ENCODE measurements at regions of chr16 and their contacts with region 1.

Region 1: DNA sequence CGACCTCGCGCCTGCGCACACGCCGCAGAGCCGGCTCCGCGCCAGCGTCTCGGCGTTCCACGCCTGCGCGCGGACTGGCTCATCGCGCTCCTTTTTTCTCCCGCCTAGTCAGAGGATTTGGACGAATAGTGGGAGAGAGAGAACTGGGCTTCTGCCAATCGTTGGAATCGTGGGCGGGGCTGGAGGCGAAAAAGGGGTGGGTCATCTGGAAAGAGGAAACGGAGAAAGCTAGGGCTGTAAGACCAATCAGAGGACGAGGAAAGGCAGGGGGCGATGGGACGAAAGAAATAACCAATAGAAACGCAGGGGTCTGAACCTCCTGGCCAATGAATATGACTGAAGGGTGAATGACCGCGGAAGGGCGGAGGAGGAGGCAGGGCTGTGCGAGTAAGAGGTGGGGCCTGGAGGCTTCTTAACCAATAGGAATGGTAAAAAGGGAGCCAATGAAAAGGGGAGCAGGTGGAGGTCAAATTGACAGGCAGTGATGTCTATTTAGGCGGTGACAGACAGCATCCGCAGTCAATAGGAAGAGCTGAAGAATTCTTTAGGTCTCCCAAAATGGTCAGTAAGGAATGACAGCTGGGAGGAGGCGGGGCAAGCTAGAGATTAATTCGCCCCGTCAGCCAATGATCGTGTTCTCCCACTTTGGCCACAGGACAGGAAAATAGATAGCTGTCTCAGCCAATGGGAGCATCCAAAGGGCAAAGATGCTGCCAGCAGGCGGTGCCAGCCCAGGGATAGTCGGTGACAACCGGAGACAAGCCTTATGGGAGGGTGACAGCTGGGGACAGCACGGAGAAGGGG is at the start of gene TBC1D10B:
- DNase-seq: peak; percentile 95
- CTCF ChIP-seq: no peak

Region 2: GRCh38 chr16:30355144-30355894 is 15.3 kb before region 1 on chr16 and contains the start of gene CD2BP2:
- CTCF ChIA-PET with region 1: interaction called, 14 read pairs
- POLR2A ChIA-PET with region 1: interaction called, 11 read pairs
- DNase-seq: peak; percentile 93
- CTCF ChIP-seq: no peak

Region 3: GRCh38 chr16:30657866-30658730 is 287.5 kb after region 1 on chr16 and contains the start of gene FBRS:
- CTCF ChIA-PET with region 1: no interaction called
- POLR2A ChIA-PET with region 1: no interaction called
- DNase-seq: peak; percentile 96
- CTCF ChIP-seq: peak; percentile 89

Measured in GM10248 (cell line).